ENCODE measurements at regions of chr17 and their contacts with region 1.

Region 1: DNA sequence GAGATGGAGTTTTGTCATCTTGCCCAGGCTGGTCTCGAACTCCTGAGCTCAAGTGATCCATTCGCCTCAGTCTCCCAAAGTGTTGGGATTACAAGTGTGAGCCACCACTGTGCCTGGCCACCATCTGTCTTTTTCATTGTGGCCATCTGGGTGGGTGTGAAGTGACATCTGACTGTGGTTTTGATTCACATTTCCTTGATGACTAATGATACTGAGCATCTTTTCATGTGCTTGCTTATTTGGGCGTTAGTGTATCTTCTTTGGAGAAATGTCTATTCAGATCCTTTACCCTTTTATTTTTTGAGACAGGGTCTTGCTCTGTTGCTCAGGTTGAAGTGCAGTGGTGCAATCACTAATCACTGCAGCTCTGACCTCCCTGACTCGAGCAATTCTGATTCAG is 53.9 kb upstream of the ERN1 start:
- DNase-seq: no peak
- H3K4me3 ChIP-seq: no peak overlapping the region
- H3K27ac ChIP-seq: no peak overlapping the region
- H3K4me1 ChIP-seq: peaks cover 0 to 3% (median 0%) of the 10 kb centered on the region in 3 donors
- H3K27me3 ChIP-seq: no peaks in the 10 kb centered on the region
- CTCF ChIP-seq: no peak

Region 2: GRCh38 chr17:64236853-64237277 is 53.0 kb after region 1 on chr17:
- intact Hi-C with region 1: loop called (anchors 10 kb)
- DNase-seq: no peak
- H3K4me3 ChIP-seq: no peak overlapping the region
- H3K27ac ChIP-seq: no peak overlapping the region
- H3K4me1 ChIP-seq: peaks cover 6 to 22% (median 18%) of the 10 kb centered on the region in 3 donors
- H3K27me3 ChIP-seq: no peaks in the 10 kb centered on the region
- CTCF ChIP-seq: no peak

Measured in kidney (tissue), 22 donors.